ENCODE measurements at regions of chr17 and their contacts with region 1.

Region 1: GRCh38 chr17:74742153-74742515 is 5.1 kb downstream of the RAB37 start:
- DNase-seq: peak; percentile 69
- ATAC-seq: peak; percentile 31
- H3K4me3 ChIP-seq: no peak overlapping the region
- H3K27ac ChIP-seq: peak overlapping the region; percentile 80
- H3K4me1 ChIP-seq: peaks cover 47% of the 10 kb centered on the region
- H3K27me3 ChIP-seq: no peaks in the 10 kb centered on the region
- CTCF ChIP-seq: no peak
- EP300 ChIP-seq: 0 out of 4 replicates have a peak, but pooled peaks of 1 of the 2 experiments have one; percentile 6
- POLR2A ChIP-seq: 0 out of 2 replicates have a peak, but pooled peaks have one; percentile 43
- RAD21 ChIP-seq: no peak

Region 2: DNA sequence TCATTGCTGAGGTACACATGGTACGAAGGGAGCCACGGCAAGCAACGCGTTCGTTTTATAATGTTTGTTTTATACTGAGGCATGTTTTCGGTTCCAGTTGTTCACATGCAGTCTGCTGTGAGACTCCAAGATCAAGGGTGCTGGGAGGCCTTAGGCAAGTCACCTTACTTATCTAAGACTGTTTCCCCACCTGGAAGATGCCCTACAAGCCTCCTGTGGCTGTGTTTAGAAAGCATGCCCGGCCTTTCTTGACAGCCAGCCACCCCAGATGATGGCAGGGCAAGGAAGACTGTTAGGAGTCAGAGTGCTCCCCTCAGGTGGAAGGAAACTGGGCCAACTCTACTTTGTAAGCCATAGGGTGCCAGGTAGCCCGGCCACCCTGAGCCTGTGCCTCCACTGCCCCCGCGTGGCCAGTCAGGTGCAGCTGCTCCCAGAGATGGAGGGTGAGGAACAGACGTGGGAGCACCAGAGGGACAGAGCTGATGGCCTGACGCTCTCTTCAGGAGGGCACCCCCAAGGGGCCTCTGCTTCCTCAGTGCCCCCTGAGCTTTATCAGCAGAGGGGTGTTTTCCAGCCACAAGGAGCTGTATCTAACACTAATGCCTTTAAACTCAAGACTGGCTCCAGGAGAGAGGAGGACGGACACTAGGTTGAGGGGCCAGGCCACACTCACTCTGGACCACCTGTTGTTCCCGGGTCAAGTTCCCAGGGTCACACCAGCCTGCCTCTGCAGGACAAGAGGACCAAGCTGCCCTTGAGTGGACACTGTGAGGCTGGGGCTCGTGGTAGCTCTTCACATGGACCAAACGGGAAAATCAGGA is 28.6 kb after region 1 on chr17:
- CTCF ChIA-PET with region 1: interaction called, 60 read pairs
- POLR2A ChIA-PET with region 1: interaction called, 4 read pairs
- RAD21 ChIA-PET with region 1: interaction called, 30 read pairs
- SMC1A ChIA-PET with region 1: interaction called, 11 read pairs
- in situ Hi-C with region 1: no loop called
- intact Hi-C with region 1: no loop called
- DNase-seq: no peak
- ATAC-seq: peak; percentile 90
- H3K4me3 ChIP-seq: no peak overlapping the region
- H3K27ac ChIP-seq: no peak overlapping the region
- H3K4me1 ChIP-seq: 0 out of 2 replicates have a peak, but pooled peaks cover 3% of the 10 kb centered on the region
- H3K27me3 ChIP-seq: no peaks in the 10 kb centered on the region
- CTCF ChIP-seq: peak; percentile 81 to 85 (median 82)
- EP300 ChIP-seq: no peak
- POLR2A ChIP-seq: peak; percentile 33; the same call in 1 of the 2 replicates
- RAD21 ChIP-seq: peak; percentile 88

Region 3: GRCh38 chr17:74864866-74865395 is 122.8 kb after region 1 on chr17:
- CTCF ChIA-PET with region 1: interaction called, 98 read pairs
- POLR2A ChIA-PET with region 1: interaction called, 5 read pairs
- RAD21 ChIA-PET with region 1: interaction called, 16 read pairs
- SMC1A ChIA-PET with region 1: interaction called, 13 read pairs
- in situ Hi-C with region 1: loop called (anchors 5 kb)
- intact Hi-C with region 1: loop called (anchors 1 kb)
- DNase-seq: no peak
- ATAC-seq: peak; percentile 81
- H3K4me3 ChIP-seq: no peak overlapping the region
- H3K27ac ChIP-seq: no peak overlapping the region
- H3K4me1 ChIP-seq: peaks cover 4% of the 10 kb centered on the region; the same call in 1 of the 2 replicates
- H3K27me3 ChIP-seq: peaks cover 5 to 8% of the 10 kb centered on the region in 2 experiments
- CTCF ChIP-seq: peak; percentile 91 to 98 (median 97)
- EP300 ChIP-seq: no peak
- POLR2A ChIP-seq: no peak
- RAD21 ChIP-seq: peak; percentile 71